Transverse colon (tissue), 4 donors: ENCODE measurements at regions of chr1 and their contacts with region 1.

Region 1: GRCh38 chr1:59976194-59977074 is 49.9 kb upstream of the CYP2J2 start:
- DNase-seq: peak; percentile 76
- H3K4me3 ChIP-seq: peak overlapping the region in 1 of 4 donors; percentile 17
- H3K27ac ChIP-seq: no peak overlapping the region
- H3K4me1 ChIP-seq: peaks cover 0 to 10% (median 1%) of the 10 kb centered on the region in 4 donors
- H3K27me3 ChIP-seq: no peaks in the 10 kb centered on the region
- CTCF ChIP-seq: peak; percentile 77 to 90 (median 82)
- EP300 ChIP-seq: no peak
- POLR2A ChIP-seq: no peak

Region 2: DNA sequence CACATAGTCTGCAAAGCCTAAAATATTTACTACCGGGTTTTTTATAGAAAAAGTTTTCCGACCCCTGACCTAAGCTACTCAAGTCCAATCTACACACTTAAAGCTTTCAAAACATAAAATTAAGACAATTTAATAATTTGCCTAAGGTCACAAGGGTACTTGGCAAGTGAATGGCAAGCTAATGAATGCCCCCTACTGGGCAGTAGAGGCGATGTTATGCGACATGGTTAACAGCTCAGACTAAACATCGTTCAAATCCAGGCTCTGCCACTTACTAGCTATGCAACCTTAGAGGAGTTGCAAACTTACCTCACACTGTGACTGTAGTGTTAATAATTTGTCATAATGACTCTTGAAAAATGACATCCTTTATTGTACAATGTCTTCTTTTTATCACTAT is 788.8 kb after region 1 on chr1:
- in situ Hi-C with region 1: loop called in 1 of 4 experiments (anchors 25 kb)
- intact Hi-C with region 1: no loop called
- DNase-seq: peak; percentile 20
- H3K4me3 ChIP-seq: no peak overlapping the region
- H3K27ac ChIP-seq: no peak overlapping the region
- H3K4me1 ChIP-seq: no peaks in the 10 kb centered on the region
- H3K27me3 ChIP-seq: no peaks in the 10 kb centered on the region
- CTCF ChIP-seq: peak in 4 of 5 experiments; percentile 31 to 53 (median 44)
- EP300 ChIP-seq: no peak
- POLR2A ChIP-seq: no peak

Region 3: GRCh38 chr1:61043010-61043820 is 1066.8 kb after region 1 on chr1:
- in situ Hi-C with region 1: loop called in 3 of 4 experiments (anchors 25 kb)
- intact Hi-C with region 1: loop called (anchors 5 kb)
- DNase-seq: peak; percentile 88
- H3K4me3 ChIP-seq: peak overlapping the region; percentile 27 to 60 (median 32)
- H3K27ac ChIP-seq: peak overlapping the region; percentile 34 to 75 (median 60)
- H3K4me1 ChIP-seq: peaks cover 0 to 12% (median 6%) of the 10 kb centered on the region in 4 donors
- H3K27me3 ChIP-seq: no peaks in the 10 kb centered on the region
- CTCF ChIP-seq: peak; percentile 82 to 89 (median 87)
- EP300 ChIP-seq: no peak
- POLR2A ChIP-seq: no peak

Region 4: DNA sequence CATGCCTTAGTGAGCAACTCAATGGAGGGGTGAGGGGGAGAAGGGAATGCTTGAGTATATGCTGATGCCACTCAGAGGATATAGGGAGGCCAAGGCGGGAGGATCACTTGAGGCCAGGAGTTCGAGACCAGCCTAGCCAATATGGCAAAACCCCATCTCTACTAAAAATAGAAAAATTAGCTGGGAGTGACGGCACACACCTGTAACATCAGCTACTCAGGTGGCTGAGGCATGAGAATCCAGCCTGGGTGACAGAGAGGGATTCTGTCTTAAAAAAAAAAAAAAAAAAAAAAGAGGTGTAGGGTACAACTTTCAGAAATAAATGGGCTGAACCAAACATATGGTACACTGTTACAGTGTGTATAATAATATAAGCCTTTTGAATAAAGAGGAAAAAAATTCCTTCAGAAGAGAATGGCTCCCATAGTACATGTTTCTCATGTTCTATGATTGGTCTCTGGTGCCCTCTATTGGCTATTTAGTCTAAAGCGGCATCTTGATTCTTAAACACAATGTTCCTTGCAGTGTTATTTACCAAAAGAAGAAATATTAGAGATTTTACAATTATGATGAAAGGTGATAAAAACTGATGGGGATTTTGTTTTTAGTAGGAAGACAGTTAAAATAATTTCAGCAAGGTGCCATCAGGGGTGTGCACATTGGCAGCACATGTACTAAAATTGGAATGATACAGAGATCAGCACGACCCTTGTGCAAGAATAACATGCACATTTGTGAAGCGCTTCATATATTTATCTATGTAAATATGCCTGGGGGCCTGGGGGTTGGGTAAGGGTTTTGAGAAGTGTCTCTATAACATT is 1875.6 kb after region 1 on chr1:
- in situ Hi-C with region 1: loop called in 1 of 4 experiments (anchors 25 kb)
- intact Hi-C with region 1: no loop called
- DNase-seq: no peak
- H3K4me3 ChIP-seq: no peak overlapping the region
- H3K27ac ChIP-seq: no peak overlapping the region
- H3K4me1 ChIP-seq: no peaks in the 10 kb centered on the region
- H3K27me3 ChIP-seq: no peaks in the 10 kb centered on the region
- CTCF ChIP-seq: peak; percentile 53 to 68 (median 64)
- EP300 ChIP-seq: no peak
- POLR2A ChIP-seq: no peak